ENCODE measurements at regions of chr6 and their contacts with region 1.

Region 1: DNA sequence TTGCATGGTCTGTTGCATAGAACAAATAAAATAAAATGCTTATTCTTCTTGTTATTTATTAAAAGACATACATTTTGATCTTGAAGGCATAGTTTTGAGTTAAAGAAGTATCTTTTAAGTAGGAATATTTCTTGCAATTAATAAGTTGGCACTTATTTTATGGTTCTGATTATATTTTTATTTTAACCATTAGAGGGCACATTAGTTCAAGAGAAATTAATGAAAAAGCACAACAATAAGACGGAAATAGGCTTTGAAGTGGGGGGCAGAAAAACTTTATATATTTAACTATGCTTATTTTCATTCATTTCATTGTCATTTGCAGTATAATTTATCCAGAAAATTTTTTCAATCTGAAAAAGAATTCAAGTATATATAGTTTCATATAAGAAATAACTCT is 44.2 kb upstream of the MAP3K7 start:
- DNase-seq: no peak
- H3K4me3 ChIP-seq: no peak overlapping the region
- H3K27ac ChIP-seq: no peak overlapping the region
- H3K4me1 ChIP-seq: no peaks in the 10 kb centered on the region
- H3K27me3 ChIP-seq: no peaks in the 10 kb centered on the region
- CTCF ChIP-seq: no peak
- EP300 ChIP-seq: no peak
- POLR2A ChIP-seq: no peak

Region 2: DNA sequence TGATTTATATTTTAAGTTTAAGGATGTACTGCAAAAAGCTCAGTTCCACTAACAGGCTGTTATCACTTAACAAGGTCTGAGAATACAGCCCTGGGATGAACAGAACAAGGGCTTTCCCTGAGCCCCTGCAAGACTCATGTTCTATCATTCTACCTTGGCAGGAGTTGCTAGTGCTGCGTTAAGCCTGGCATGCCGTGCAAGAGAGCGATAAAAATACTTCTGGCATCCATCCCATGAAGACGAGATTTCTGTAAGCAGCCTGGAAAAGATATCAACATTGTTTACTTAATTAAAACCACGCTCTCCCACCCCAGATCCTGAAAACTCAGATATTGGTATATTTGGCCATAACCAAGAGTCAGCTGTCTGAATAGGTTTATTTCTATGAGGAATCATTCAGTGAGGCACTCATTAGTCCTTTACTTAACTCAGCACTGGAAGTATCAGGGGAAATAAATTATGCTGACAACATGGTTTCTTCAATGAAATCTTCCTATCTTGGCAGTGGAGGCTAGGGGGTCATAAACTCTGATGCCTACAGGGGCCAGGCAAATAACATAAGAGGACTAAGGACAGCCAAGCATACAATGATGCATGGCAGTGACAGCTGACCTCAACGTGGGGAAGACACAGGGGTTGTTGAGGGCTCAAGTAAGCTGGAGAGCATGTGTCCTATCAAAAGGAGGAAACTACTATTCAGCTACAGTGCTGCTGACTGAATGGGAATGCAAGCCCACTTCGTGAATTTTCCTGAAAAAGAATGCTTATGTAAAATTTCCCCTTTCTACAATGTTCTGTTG is 954.9 kb before region 1 on chr6:
- intact Hi-C with region 1: no loop called
- DNase-seq: no peak
- H3K4me3 ChIP-seq: no peak overlapping the region
- H3K27ac ChIP-seq: no peak overlapping the region
- H3K4me1 ChIP-seq: peaks cover 0 to 10% (median 7%) of the 10 kb centered on the region in 4 donors
- H3K27me3 ChIP-seq: no peaks in the 10 kb centered on the region
- CTCF ChIP-seq: no peak
- EP300 ChIP-seq: no peak
- POLR2A ChIP-seq: no peak

Region 3: DNA sequence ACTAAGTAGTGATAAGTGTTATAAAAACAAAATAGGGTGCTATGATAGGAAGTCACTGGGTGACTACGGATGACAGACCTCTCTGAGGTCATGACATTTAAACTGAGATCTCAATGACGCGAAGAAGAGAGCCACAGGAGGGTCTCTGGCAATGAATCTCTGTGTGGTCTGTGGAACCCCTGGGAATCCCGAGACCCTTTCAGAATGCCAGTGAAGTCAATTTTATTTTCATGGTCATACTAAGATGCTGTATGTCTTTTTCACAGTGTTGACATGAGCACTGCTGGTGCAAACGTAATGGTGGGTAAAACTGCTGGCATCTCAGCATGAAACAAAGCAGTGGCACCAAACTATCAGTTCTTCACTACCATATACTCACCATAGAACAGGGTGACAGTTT is 581.8 kb before region 1 on chr6:
- intact Hi-C with region 1: no loop called
- DNase-seq: no peak
- H3K4me3 ChIP-seq: no peak overlapping the region
- H3K27ac ChIP-seq: no peak overlapping the region
- H3K4me1 ChIP-seq: no peaks in the 10 kb centered on the region
- H3K27me3 ChIP-seq: no peaks in the 10 kb centered on the region
- CTCF ChIP-seq: no peak
- EP300 ChIP-seq: no peak
- POLR2A ChIP-seq: no peak

Region 4: DNA sequence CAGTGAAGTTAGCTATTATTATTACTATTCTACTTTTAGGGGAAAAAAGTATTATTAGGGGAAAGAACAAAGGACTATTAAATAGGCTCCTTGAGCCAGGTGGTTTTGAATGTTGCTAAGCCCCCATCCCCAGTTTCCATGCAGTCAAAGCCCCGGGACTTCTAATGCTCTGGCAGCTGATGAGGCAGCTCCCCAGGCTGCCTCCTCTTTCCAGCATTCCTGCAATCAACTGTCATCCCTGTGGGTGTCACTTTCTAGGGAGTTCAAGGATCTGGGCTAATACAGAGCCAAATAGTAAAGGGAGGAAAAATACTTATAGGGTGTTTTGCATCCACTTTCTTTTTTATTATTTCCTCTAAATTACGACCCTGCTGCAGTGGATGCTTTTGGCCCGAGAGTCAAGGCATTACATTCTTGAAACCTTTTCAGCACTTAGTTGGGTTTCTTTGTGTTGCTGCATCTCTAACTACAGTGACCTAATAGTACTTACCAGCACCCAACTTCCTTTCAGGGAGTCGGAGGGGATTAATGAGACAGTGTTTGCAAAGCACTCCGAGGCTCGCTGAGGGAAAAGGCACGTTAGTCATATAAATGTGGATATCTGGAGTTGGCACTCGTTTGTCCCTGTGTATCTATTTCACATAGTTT is 259.8 kb after region 1 on chr6:
- intact Hi-C with region 1: loop called (anchors 10 kb)
- DNase-seq: no peak
- H3K4me3 ChIP-seq: no peak overlapping the region
- H3K27ac ChIP-seq: no peak overlapping the region
- H3K4me1 ChIP-seq: peaks cover 0 to 4% (median 0%) of the 10 kb centered on the region in 4 donors
- H3K27me3 ChIP-seq: no peaks in the 10 kb centered on the region
- CTCF ChIP-seq: no peak
- EP300 ChIP-seq: no peak
- POLR2A ChIP-seq: no peak

Measured in esophagus muscularis mucosa (tissue), 4 donors.